ENCODE measurements at regions of chr6 and their contacts with region 1.

Region 1: DNA sequence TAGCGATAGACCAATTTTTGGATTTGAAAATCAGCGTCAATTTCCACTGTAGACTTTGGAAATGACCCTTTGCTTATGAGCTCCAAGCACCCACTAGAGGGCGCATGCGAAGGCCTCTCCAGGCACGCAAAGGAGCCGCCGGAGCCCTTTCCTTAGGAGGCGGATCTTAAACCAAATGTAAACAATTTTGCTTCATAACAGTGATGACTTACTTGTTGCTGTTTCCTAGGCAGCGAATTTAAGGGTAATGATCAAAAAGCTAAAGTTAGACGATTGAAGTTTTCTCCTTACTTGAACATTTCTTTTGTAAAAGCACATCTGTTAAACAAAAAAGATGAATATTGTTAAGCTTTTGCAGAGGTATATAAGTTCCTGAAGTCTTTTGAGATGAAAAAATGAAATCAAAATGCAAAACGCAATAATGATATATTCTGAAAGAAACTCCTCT is 29.2 kb upstream of the EXOC2 start:
- DNase-seq: peak; percentile 45 to 78 (median 53)
- H3K4me3 ChIP-seq: no peak overlapping the region
- H3K4me3 Mint-ChIP-seq: peak overlapping the region in 1 of 7 donors; percentile 69
- H3K27ac ChIP-seq: no peak overlapping the region
- H3K27ac Mint-ChIP-seq: peak overlapping the region in 1 of 8 donors; percentile 30
- H3K4me1 ChIP-seq: peaks cover 6% of the 10 kb centered on the region
- H3K4me1 Mint-ChIP-seq: peaks cover 6 to 13% (median 7%) of the 10 kb centered on the region in 3 donors
- H3K27me3 ChIP-seq: no peaks in the 10 kb centered on the region
- H3K27me3 Mint-ChIP-seq: peaks cover 17 to 22% of the 10 kb centered on the region in 2 donors

Region 2: GRCh38 chr6:551405-551804 is 170.7 kb before region 1 on chr6:
- CTCF ChIA-PET with region 1: no interaction called
- POLR2A ChIA-PET with region 1: no interaction called
- DNase-seq: peak in 1 of 5 donors; percentile 1
- H3K4me3 ChIP-seq: no peak overlapping the region
- H3K4me3 Mint-ChIP-seq: no peak overlapping the region
- H3K27ac ChIP-seq: no peak overlapping the region
- H3K27ac Mint-ChIP-seq: peak overlapping the region in 1 of 8 donors; percentile 27
- H3K4me1 ChIP-seq: peaks cover 12% of the 10 kb centered on the region
- H3K4me1 Mint-ChIP-seq: peaks cover 12 to 26% (median 22%) of the 10 kb centered on the region in 3 donors
- H3K27me3 ChIP-seq: no peaks in the 10 kb centered on the region
- H3K27me3 Mint-ChIP-seq: no peaks in the 10 kb centered on the region

Region 3: DNA sequence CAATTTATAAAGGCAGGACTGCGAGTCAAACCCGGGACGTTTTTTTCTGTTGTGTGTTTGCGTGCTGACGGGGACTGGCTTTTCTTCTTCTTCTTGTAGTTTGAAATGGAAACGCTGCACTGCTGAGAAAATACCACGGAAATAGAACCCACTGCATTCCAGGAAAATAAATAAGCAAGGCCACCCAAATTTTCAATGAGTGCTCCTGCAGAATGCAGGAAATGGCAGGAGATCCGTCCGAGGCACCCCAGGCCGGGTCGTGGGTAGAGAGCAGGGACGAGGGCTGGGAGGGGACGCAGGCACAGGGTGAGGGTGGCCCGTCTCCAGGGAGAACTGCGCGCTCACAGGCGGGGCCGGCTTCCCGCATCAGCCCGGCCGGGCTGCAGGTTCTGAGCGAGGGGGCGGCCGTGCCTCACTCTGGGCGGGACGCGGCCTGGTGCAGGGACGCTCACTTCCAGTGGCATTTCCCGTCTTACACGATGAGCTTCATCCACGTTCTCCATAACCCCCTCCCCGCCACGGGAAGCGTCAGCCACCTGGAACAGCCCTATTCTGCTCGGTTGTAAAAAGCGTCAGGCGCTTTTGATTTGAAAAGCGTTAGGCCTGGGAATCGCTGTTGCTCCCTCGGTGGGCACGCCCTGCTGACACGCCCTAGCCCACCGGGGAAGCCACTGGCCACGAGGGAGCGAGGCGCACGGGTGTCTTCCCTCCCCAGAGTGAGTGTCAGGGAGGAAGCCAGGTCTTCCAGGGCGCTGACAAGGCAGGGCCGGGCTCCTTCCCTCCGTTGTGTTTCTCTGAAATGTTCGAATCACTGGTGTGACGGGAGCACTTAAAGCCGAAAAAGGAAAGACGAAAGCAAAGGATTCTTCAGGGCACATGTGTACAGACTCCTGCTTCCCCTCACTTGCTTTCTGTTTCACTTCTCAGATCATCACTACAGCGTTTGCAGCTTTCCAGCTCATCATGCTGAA is 11.2 kb before region 1 on chr6:
- CTCF ChIA-PET with region 1: interaction called, 14 read pairs
- POLR2A ChIA-PET with region 1: no interaction called
- DNase-seq: peak; percentile 34 to 61 (median 55)
- H3K4me3 ChIP-seq: peak overlapping the region; percentile 74
- H3K4me3 Mint-ChIP-seq: peak overlapping the region; percentile 97 to 100 (median 99)
- H3K27ac ChIP-seq: peak overlapping the region; percentile 84
- H3K27ac Mint-ChIP-seq: peak overlapping the region; percentile 92 to 100 (median 99)
- H3K4me1 ChIP-seq: peaks cover 10% of the 10 kb centered on the region
- H3K4me1 Mint-ChIP-seq: peaks cover 20 to 23% (median 21%) of the 10 kb centered on the region in 3 donors
- H3K27me3 ChIP-seq: no peaks in the 10 kb centered on the region
- H3K27me3 Mint-ChIP-seq: peaks cover 2 to 9% of the 10 kb centered on the region in 2 donors

Region 4: DNA sequence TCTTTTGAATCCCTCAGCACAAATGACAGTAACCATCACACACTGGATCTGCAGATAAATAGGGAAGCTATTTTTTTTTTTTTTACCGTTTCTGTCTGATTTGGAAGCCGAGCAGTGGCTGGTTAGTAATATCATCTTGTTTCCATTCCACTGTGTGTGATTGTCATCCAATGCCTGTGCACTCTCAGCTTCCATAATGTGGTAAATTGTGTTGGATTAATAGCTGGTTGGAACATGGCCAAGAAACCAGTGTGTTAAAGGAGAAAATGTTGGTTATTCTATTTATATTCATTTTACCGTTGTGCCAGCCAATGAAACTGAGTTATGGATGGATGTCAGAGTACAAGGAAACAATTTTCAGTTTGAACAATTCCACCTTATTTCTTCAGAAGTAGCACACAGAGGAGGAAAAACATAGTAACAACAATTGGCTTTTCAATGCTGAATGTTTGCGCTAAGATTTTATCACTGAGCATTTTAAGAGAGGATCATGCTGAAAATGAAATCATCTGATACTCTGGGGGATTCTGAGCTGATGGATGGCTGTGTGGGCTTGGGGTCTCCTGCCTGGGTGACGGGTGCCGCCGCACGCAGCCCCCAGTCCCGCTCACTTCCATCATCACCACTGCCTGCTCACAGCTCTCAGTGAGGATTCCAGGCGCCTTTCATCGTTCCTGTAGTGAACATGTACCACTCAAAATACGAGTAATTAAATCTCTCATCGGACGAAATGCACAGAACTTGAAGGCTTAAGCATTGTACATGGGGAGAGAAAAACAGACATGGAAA is 11.5 kb after region 1 on chr6:
- CTCF ChIA-PET with region 1: interaction called, 18 read pairs
- POLR2A ChIA-PET with region 1: no interaction called
- DNase-seq: no peak
- H3K4me3 ChIP-seq: no peak overlapping the region
- H3K4me3 Mint-ChIP-seq: no peak overlapping the region
- H3K27ac ChIP-seq: no peak overlapping the region
- H3K27ac Mint-ChIP-seq: no peak overlapping the region
- H3K4me1 ChIP-seq: no peaks in the 10 kb centered on the region
- H3K4me1 Mint-ChIP-seq: no peaks in the 10 kb centered on the region
- H3K27me3 ChIP-seq: no peaks in the 10 kb centered on the region
- H3K27me3 Mint-ChIP-seq: peaks cover 5 to 29% of the 10 kb centered on the region in 2 donors

Region 5: DNA sequence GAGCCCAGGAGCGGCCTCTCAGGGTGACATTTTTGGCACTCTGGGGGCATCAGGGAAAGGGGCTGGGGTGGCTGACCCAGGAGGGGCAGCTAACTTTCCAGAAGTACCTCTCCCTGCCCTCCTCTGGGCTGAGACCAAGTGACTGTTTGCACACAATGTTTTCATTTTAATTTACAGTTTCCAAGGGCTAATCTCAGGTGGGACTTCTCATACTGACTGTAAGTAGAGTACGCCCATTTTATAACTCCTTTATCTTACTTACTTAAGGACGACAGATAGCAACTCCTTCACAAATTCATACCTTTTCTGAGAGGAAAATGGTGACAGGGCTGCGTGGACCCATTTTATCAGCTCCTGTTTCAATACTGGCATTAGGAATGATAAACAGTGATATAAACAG is 143.7 kb after region 1 on chr6:
- CTCF ChIA-PET with region 1: no interaction called
- POLR2A ChIA-PET with region 1: no interaction called
- DNase-seq: no peak
- H3K4me3 ChIP-seq: no peak overlapping the region
- H3K4me3 Mint-ChIP-seq: no peak overlapping the region
- H3K27ac ChIP-seq: no peak overlapping the region
- H3K27ac Mint-ChIP-seq: no peak overlapping the region
- H3K4me1 ChIP-seq: no peaks in the 10 kb centered on the region
- H3K4me1 Mint-ChIP-seq: no peaks in the 10 kb centered on the region
- H3K27me3 ChIP-seq: peaks cover 6% of the 10 kb centered on the region
- H3K27me3 Mint-ChIP-seq: peaks cover 8 to 53% of the 10 kb centered on the region in 2 donors

Region 6: GRCh38 chr6:894274-894673 is 172.2 kb after region 1 on chr6:
- CTCF ChIA-PET with region 1: no interaction called
- POLR2A ChIA-PET with region 1: no interaction called
- DNase-seq: no peak
- H3K4me3 ChIP-seq: no peak overlapping the region
- H3K4me3 Mint-ChIP-seq: no peak overlapping the region
- H3K27ac ChIP-seq: no peak overlapping the region
- H3K27ac Mint-ChIP-seq: no peak overlapping the region
- H3K4me1 ChIP-seq: no peaks in the 10 kb centered on the region
- H3K4me1 Mint-ChIP-seq: no peaks in the 10 kb centered on the region
- H3K27me3 ChIP-seq: no peaks in the 10 kb centered on the region
- H3K27me3 Mint-ChIP-seq: peaks cover 4 to 20% of the 10 kb centered on the region in 2 donors

Measured in CD8-positive, alpha-beta memory T cell (primary cell).